AG04449 (cell line): ENCODE measurements at regions of chr12 and their contacts with region 1.

Region 1: DNA sequence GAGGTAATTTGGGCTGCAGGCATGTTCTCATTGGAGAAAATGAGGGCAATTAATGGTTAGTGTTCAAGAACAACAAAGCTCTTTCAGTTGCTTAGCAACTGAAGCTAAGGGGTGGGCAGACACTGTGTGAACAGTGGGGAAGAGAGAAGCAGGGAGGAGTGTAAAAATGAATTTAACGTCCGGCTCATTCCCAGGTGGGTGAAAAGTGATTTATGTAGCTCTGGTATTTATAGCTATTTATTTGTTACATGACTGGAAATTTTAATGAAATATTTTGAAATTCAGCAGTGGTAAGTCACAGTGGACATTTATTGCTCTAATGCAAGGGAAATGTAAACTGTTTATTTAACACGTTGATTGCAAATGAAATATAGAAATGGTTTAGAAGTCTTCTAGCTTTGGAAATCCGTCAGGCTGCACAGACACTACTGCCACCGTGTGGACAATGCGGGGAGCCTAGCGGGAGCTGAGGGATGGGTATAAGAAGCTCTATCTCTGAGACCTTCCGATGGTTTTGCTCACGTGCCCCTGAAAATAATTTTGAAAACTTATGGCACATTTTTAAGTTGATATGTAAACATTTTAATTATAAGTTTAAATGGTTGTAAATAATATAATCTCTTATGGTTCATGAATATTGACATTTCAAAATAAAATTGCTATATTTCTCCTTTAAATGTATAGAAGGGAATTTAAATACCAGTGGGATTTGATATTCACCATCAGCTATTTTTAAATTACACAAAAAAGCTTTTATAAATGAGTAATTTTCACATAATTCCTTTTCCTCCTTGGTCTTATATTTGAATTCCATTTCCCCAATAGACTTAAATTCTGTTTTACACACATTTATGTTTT is 54.4 kb downstream of the E2F7 start:
- DNase-seq: peak; percentile 12
- H3K4me3 ChIP-seq: no peak overlapping the region
- CTCF ChIP-seq: peak; percentile 93

Region 2: DNA sequence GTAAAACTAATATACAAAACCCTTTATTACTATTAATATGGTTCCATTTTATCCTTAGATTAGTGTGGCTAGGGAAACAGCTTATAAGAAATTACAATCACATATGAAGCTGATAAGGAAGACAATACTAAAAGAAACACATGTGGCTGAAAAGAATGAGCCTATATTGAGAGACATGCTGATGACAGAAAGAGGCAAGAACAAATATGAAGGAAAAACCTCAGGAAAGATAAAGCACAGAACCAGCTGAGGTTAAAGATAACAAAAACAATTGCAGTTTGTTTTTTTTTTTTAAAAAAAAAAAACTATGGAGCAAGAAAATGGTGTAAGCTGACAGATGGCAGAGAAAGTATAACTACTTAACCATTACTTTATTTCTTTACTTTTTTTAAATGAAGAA is 382.2 kb before region 1 on chr12:
- CTCF ChIA-PET with region 1: interaction called, 70 read pairs
- POLR2A ChIA-PET with region 1: no interaction called
- DNase-seq: no peak
- H3K4me3 ChIP-seq: no peak overlapping the region
- CTCF ChIP-seq: no peak

Region 3: GRCh38 chr12:76830436-76830835 is 180.5 kb before region 1 on chr12:
- CTCF ChIA-PET with region 1: interaction called, 14 read pairs
- POLR2A ChIA-PET with region 1: no interaction called
- DNase-seq: no peak
- H3K4me3 ChIP-seq: no peak overlapping the region
- CTCF ChIP-seq: no peak

Region 4: GRCh38 chr12:76866726-76867125 is 144.2 kb before region 1 on chr12:
- CTCF ChIA-PET with region 1: interaction called, 24 read pairs
- POLR2A ChIA-PET with region 1: interaction called, 4 read pairs
- DNase-seq: no peak
- H3K4me3 ChIP-seq: no peak overlapping the region
- CTCF ChIP-seq: no peak

Region 5: DNA sequence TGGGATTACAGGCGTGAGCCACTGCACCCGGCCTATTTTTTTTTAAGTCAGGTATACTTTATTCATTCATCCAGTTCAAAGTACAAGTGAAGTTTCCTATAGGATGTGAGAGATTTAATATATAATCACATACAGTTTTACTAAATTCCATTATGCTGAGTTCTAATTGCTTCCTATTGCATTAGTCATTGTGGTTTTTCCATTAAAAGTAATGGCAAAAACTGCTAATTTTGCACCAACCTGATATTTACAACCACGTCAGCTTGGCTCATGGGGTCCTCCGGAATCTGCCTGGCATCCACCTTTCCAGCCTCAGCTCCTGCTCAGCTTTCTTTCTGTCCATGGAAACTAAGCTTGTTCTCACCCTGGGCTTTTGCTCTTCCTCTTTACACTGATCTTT is 65.1 kb before region 1 on chr12:
- CTCF ChIA-PET with region 1: interaction called, 22 read pairs
- POLR2A ChIA-PET with region 1: interaction called, 5 read pairs
- DNase-seq: no peak
- H3K4me3 ChIP-seq: no peak overlapping the region
- CTCF ChIP-seq: no peak

Region 6: DNA sequence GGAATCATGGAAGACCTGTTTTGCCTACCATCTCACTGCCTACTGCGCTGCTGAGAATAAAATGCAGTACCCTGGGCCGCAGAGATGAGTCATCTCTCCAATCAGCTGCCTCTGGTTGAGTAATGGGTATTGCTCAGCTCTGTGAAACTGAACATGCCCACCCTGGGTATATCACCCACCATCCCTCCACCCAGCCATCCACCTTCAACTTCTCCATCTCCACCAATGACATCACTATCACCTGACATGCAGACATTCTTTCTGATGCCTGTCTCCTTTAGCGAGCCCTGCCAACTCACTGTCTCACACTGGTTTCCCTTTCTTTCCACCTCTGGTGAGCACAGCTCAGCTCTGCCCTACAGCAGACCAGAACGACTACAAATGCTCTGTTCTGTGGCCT is 20.8 kb after region 1 on chr12:
- CTCF ChIA-PET with region 1: interaction called, 21 read pairs
- POLR2A ChIA-PET with region 1: no interaction called
- DNase-seq: no peak
- H3K4me3 ChIP-seq: no peak overlapping the region
- CTCF ChIP-seq: no peak

Region 7: DNA sequence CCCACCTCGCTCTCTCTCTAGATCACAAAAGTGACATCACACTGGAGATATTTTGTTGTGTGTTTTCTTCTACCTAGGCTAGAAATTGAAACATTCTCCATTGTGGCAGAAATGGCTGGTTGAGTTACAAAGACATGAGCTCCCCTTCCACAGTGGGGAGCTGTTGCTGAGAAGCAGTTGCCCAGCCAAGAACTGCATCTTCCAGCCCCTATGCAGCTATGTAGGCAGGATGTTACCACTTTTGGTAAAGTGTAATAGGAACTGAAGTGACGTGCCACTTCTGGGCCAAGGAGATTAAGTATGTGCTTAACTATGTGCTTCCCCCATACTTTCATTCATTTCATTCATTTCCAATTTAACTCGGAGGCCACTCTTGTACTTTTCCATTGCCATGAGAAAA is 193.2 kb after region 1 on chr12:
- CTCF ChIA-PET with region 1: no interaction called
- POLR2A ChIA-PET with region 1: no interaction called
- DNase-seq: no peak
- H3K4me3 ChIP-seq: no peak overlapping the region
- CTCF ChIP-seq: no peak

Region 8: DNA sequence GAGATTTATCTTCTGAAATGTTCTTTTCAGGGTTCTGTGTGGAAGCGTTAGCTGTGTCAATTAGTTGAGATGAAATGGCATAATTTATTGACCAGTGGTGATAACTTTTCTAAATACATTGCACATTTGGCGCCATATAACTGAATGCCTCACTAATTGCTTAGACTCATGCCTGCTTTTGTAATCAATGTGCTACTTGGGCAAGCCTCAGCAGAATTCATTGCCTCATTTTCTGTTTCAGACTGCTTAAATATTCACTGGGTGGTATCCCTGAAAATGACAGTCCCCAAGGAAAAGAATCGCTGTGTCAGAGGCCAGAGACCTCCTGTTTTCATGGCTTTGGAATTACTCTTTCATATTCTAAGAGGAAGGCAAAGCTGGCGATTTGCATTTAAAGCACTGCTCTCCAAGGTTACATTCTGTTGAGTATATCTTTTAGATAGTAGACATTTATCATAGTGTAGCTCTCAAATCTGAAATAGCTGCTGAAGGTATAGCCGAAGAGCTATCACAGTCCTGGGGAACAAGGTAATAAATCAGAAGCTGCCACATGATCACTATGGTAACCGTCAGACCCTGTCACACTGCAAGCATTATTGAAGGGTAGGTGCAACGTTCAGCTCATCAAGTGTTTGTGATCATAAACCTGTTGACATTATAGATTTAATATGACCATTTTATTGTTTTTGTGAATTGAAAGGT is 351.7 kb after region 1 on chr12:
- CTCF ChIA-PET with region 1: no interaction called
- POLR2A ChIA-PET with region 1: no interaction called
- DNase-seq: no peak
- H3K4me3 ChIP-seq: no peak overlapping the region
- CTCF ChIP-seq: no peak